Activated CD8-positive, alpha-beta T cell treated with anti-CD3 and anti-CD28 coated beads, Interleukin-2, amount 10 ng/mL, durations not matched to agents 7 days and 5 days (primary cell): ENCODE measurements at regions of chr20 and their contacts with region 1.

Region 1: GRCh38 chr20:36199345-36200257 is 36.7 kb upstream of the AAR2 start:
- DNase-seq: peak; percentile 81
- ATAC-seq: peak; percentile 81
- H3K4me3 Mint-ChIP-seq: no peak overlapping the region
- H3K27ac Mint-ChIP-seq: no peak overlapping the region
- H3K4me1 Mint-ChIP-seq: peaks cover 4% of the 10 kb centered on the region
- H3K27me3 Mint-ChIP-seq: peaks cover 3% of the 10 kb centered on the region

Region 2: GRCh38 chr20:36154700-36155628 is 44.6 kb before region 1 on chr20 and contains the start of gene EPB41L1:
- CTCF ChIA-PET with region 1: interaction called, 21 read pairs
- POLR2A ChIA-PET with region 1: interaction called, 3 read pairs
- DNase-seq: no peak
- ATAC-seq: no peak
- H3K4me3 Mint-ChIP-seq: peak within 1 kb of the TSS; percentile 7
- H3K27ac Mint-ChIP-seq: no peak within 1 kb of the TSS
- H3K4me1 Mint-ChIP-seq: no peaks in the 10 kb centered on the region
- H3K27me3 Mint-ChIP-seq: peaks cover 35% of the 10 kb centered on the region
- total RNA-seq, gene EPB41L1: not detected

Region 3: DNA sequence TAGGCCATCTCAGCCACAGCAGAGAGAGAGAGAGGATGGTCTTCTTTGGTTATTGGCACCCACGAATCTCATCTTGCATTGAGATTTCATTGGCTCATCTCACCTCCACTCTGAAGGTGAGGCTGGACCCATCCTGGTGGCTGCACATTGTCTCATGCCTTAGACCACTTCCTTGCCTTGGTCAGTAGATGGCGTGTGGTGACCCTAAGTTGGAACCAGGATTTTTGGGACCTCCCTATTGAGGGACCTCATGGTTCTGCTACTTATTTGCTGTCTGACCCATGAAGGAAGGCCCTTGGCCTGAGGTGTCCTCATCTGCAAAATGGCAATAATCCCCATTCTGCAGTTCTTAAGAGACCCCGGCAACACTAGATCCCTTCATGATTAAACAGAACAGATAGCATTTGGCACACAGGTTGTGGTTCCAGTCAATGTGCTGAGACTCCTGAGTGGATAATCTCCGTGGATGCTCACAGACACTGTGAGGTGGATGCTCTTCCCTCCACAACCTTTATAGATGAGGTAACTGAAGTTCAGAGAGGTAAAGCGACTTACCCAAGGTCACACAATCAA is 15.2 kb after region 1 on chr20:
- CTCF ChIA-PET with region 1: interaction called, 20 read pairs
- POLR2A ChIA-PET with region 1: no interaction called
- DNase-seq: peak; percentile 24
- ATAC-seq: no peak
- H3K4me3 Mint-ChIP-seq: no peak overlapping the region
- H3K27ac Mint-ChIP-seq: no peak overlapping the region
- H3K4me1 Mint-ChIP-seq: peaks cover 2% of the 10 kb centered on the region
- H3K27me3 Mint-ChIP-seq: no peaks in the 10 kb centered on the region

Region 4: GRCh38 chr20:36236786-36237121 is 37.2 kb after region 1 on chr20:
- CTCF ChIA-PET with region 1: interaction called, 12 read pairs
- POLR2A ChIA-PET with region 1: no interaction called
- DNase-seq: no peak
- ATAC-seq: peak; percentile 32
- H3K4me3 Mint-ChIP-seq: peak overlapping the region; percentile 85
- H3K27ac Mint-ChIP-seq: peak overlapping the region; percentile 90
- H3K4me1 Mint-ChIP-seq: peaks cover 28% of the 10 kb centered on the region
- H3K27me3 Mint-ChIP-seq: no peaks in the 10 kb centered on the region

Region 5: GRCh38 chr20:36439040-36439730 is 239.6 kb after region 1 on chr20:
- CTCF ChIA-PET with region 1: interaction called, 46 read pairs
- POLR2A ChIA-PET with region 1: no interaction called
- DNase-seq: peak; percentile 77
- ATAC-seq: peak; percentile 56
- H3K4me3 Mint-ChIP-seq: no peak overlapping the region
- H3K27ac Mint-ChIP-seq: no peak overlapping the region
- H3K4me1 Mint-ChIP-seq: peaks cover 7% of the 10 kb centered on the region
- H3K27me3 Mint-ChIP-seq: peaks cover 9% of the 10 kb centered on the region

Region 6: GRCh38 chr20:36645998-36646397 is 446.4 kb after region 1 on chr20 and contains the start of gene SLA2:
- CTCF ChIA-PET with region 1: no interaction called
- POLR2A ChIA-PET with region 1: no interaction called
- DNase-seq: peak; percentile 86
- ATAC-seq: peak; percentile 80
- H3K4me3 Mint-ChIP-seq: peak within 1 kb of the TSS; percentile 99
- H3K27ac Mint-ChIP-seq: peak within 1 kb of the TSS; percentile 93
- H3K4me1 Mint-ChIP-seq: peaks cover 49% of the 10 kb centered on the region
- H3K27me3 Mint-ChIP-seq: no peaks in the 10 kb centered on the region
- total RNA-seq, gene SLA2: 131 to 137 TPM